Colonic mucosa (tissue), 4 donors: ENCODE measurements at regions of chr7 and their contacts with region 1.

Region 1: DNA sequence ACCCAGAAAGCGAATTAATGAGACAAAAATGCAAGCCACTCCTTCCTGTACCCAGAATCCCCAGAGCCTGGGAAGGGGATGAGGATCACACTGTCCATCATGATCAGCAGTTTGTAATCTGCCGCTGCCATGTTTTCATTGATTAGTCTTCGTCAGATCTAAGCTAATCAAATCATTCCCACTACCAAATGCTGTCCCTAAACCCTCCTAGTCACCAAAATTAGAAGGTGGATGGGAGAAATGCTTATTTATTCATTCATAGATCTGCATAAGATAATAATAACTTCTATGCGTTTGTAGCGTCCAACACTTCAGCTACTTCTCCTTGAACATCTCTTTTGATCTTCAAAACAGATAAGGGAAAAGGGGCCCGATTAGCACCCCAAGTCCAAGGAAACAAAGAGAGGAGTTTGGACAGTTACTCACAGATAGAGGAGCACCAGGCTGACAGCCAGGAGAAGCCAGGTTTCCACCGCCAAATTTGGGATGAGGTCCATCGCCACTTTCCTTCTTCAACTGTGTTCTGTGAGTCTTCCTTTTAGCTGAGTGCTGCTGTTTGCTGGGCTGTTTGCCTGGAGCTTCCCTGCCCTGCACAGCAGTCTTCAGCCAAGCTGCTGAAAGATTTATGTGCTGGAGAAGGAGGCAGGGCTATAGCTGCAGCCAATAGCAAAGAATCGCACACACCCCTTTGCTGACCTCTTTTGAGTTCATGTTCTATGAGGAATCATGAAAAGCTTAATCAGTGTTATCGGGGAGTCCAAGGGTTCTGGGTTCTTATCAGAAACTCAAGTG is at the start of gene CYP3A5:
- DNase-seq: peak; percentile 85
- H3K4me3 ChIP-seq: peak within 1 kb of the TSS; percentile 32
- H3K27ac ChIP-seq: peak within 1 kb of the TSS; percentile 88
- H3K4me1 ChIP-seq: no peaks in the 10 kb centered on the region
- H3K27me3 ChIP-seq: no peaks in the 10 kb centered on the region
- CTCF ChIP-seq: no peak
- total RNA-seq, gene CYP3A5: 52.6 to 112 TPM

Region 2: GRCh38 chr7:99408379-99409191 is 271.0 kb before region 1 on chr7 and contains the starts of genes BUD31 and PDAP1:
- intact Hi-C with region 1: no loop called
- DNase-seq: peak; percentile 95
- H3K4me3 ChIP-seq: peak within 1 kb of the TSS; percentile 90
- H3K27ac ChIP-seq: peak within 1 kb of the TSS; percentile 88
- H3K4me1 ChIP-seq: peaks cover 12% of the 10 kb centered on the region
- H3K27me3 ChIP-seq: no peaks in the 10 kb centered on the region
- CTCF ChIP-seq: no peak
- total RNA-seq, gene BUD31: 82.8 to 113 TPM
- total RNA-seq, gene PDAP1: 79.7 to 133 TPM

Region 3: GRCh38 chr7:99794585-99795502 is 115.2 kb after region 1 on chr7:
- intact Hi-C with region 1: loop called (anchors 10 kb)
- DNase-seq: no peak
- H3K4me3 ChIP-seq: no peak overlapping the region
- H3K27ac ChIP-seq: no peak overlapping the region
- H3K4me1 ChIP-seq: no peaks in the 10 kb centered on the region
- H3K27me3 ChIP-seq: no peaks in the 10 kb centered on the region
- CTCF ChIP-seq: no peak